Calu3 (cell line): ENCODE measurements at regions of chr2 and their contacts with region 1.

Region 1: DNA sequence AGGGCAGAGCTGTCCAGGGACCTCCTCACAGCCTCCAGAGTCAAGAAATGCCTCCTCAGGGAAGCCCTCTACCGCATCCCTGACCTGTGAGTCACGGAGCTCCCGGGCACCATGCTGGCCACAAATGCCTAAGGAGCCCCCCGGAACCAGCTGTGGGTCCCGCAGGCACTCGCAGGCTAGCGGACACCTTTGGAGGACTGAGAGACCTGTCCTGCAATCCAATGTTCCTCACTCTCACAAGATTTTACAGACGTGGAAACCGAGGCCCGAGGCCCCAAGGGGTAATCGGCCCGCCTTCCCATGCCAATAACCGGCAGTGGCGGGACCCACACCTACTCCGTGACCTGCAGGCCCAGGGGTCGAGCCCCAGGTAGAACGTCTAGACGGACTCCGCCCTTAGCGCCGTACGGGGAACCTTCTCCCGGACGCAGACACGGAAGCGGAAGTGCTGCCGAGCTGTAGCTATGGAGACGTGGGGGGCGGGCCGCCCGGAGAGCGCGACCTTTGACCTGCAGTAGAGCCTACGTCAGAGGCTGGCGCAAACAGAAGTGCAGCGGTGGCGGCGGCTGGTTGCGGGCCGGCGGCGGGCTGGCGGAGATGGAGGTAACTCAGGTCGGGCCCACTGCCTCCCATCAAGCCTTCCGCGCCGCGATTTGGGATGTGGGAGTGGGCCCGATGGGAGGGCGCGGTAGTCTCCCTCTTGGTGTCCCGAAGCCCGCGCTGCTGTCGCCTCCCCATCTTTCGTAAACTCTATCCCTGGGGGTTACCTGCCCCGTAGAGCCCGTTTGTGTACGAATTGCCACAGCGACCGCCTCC is at the start of gene GCC2:
- DNase-seq: peak; percentile 95
- H3K4me3 Mint-ChIP-seq: peak within 1 kb of the TSS; percentile 99
- H3K27ac Mint-ChIP-seq: peak within 1 kb of the TSS; percentile 99
- H3K4me1 Mint-ChIP-seq: peaks cover 17% of the 10 kb centered on the region
- H3K27me3 Mint-ChIP-seq: no peaks in the 10 kb centered on the region
- CTCF ChIP-seq: no peak
- total RNA-seq, gene GCC2: 54.9 and 60.4 TPM in 2 replicates

Region 2: GRCh38 chr2:108351889-108352288 is 97.0 kb before region 1 on chr2:
- CTCF ChIA-PET with region 1: no interaction called
- intact Hi-C with region 1: loop called (anchors 5 kb)
- DNase-seq: no peak
- H3K4me3 Mint-ChIP-seq: no peak overlapping the region
- H3K27ac Mint-ChIP-seq: no peak overlapping the region
- H3K4me1 Mint-ChIP-seq: no peaks in the 10 kb centered on the region
- H3K27me3 Mint-ChIP-seq: no peaks in the 10 kb centered on the region
- CTCF ChIP-seq: no peak

Region 3: DNA sequence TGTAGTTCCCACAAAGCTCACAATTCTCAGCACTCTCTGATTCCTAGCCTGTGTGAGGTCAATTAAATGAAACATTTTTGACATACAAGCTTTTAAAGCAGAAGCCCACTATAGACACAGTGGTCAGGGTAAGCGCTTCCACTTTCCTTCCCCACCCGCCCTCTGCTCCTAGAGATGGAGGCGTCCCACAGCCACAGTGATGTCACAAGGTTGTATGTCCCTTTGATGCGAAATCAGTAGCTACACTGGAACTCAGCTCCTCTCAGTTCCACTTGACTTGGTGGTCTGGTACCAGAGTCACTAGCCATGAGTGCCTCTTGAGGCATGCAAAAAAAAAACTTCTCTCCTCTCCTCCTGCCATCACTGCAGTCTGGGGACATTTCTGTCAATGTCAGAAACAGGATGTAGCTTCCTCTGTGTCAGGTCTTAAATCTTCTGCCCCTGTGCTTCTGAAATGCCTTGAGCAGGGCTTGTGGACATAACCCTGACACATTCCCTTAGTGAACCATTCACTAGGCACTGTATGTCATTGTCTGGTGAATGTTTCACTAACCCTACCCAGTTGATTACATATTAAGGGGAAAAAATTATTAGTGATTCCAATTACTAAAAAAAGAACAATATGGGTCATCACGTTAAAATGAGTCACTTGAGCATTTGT is 63.3 kb before region 1 on chr2:
- CTCF ChIA-PET with region 1: no interaction called
- intact Hi-C with region 1: loop called (anchors 5 kb)
- DNase-seq: peak; percentile 39
- H3K4me3 Mint-ChIP-seq: peak overlapping the region; percentile 28
- H3K27ac Mint-ChIP-seq: peak overlapping the region; percentile 66
- H3K4me1 Mint-ChIP-seq: peaks cover 60% of the 10 kb centered on the region
- H3K27me3 Mint-ChIP-seq: no peaks in the 10 kb centered on the region
- CTCF ChIP-seq: no peak